ENCODE measurements at regions of chr17 and their contacts with region 1.

Region 1: DNA sequence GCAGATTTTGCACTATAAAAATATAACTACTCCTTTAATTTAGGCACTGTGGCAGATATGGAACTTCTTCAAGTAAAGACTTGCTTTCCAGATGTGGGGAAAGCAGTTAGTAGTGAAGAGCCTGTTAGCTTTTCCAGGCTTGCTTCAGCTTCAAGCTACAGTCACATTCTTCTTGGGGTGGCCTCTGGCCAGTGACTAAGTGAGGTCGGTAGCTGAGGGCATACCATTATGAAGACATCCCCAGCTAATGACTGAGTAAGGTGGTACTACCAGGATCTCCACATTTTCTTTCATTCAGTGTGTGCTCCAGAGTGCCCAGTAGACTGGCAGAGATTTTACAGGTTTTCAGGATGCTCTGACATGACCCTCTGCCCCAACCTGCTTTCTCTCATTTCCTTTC is 167.1 kb upstream of the KIF2B start:
- DNase-seq: no peak
- ATAC-seq: no peak
- H3K4me3 ChIP-seq: no peak overlapping the region
- H3K4me3 Mint-ChIP-seq: no peak overlapping the region
- H3K27ac ChIP-seq: no peak overlapping the region
- H3K27ac Mint-ChIP-seq: no peak overlapping the region
- H3K4me1 ChIP-seq: no peaks in the 10 kb centered on the region
- H3K4me1 Mint-ChIP-seq: no peaks in the 10 kb centered on the region
- H3K27me3 ChIP-seq: no peaks in the 10 kb centered on the region
- H3K27me3 Mint-ChIP-seq: no peaks in the 10 kb centered on the region
- CTCF ChIP-seq: no peak

Region 2: GRCh38 chr17:53588317-53588716 is 67.3 kb before region 1 on chr17:
- CTCF ChIA-PET with region 1: no interaction called
- POLR2A ChIA-PET with region 1: no interaction called
- intact Hi-C with region 1: loop called in 1 of 2 experiments (anchors 5 kb)
- DNase-seq: no peak
- ATAC-seq: no peak
- H3K4me3 ChIP-seq: no peak overlapping the region
- H3K4me3 Mint-ChIP-seq: no peak overlapping the region
- H3K27ac ChIP-seq: no peak overlapping the region
- H3K27ac Mint-ChIP-seq: no peak overlapping the region
- H3K4me1 ChIP-seq: no peaks in the 10 kb centered on the region
- H3K4me1 Mint-ChIP-seq: no peaks in the 10 kb centered on the region
- H3K27me3 ChIP-seq: no peaks in the 10 kb centered on the region
- H3K27me3 Mint-ChIP-seq: no peaks in the 10 kb centered on the region
- CTCF ChIP-seq: no peak